Activated B cell treated with CpG ODN at 0.5 μM for 24 hours (primary cell): ENCODE measurements at regions of chr11 and their contacts with region 1.

Region 1: GRCh38 chr11:83071567-83072349 is at the start of gene RAB30:
- DNase-seq: peak; percentile 75
- ATAC-seq: peak; percentile 94
- H3K4me3 Mint-ChIP-seq: no peak within 1 kb of the TSS
- H3K27ac Mint-ChIP-seq: no peak within 1 kb of the TSS
- H3K4me1 Mint-ChIP-seq: peaks cover 66% of the 10 kb centered on the region
- H3K27me3 Mint-ChIP-seq: no peaks in the 10 kb centered on the region
- CTCF ChIP-seq: no peak
- total RNA-seq, gene RAB30: 160 and 173 TPM in 2 replicates

Region 2: GRCh38 chr11:82900277-82901164 is 171.2 kb before region 1 on chr11 and contains the start of gene PRCP:
- CTCF ChIA-PET with region 1: no interaction called
- POLR2A ChIA-PET with region 1: interaction called, 10 read pairs
- intact Hi-C with region 1: loop called (anchors 1 kb)
- DNase-seq: peak; percentile 78
- ATAC-seq: peak; percentile 75
- H3K4me3 Mint-ChIP-seq: peak within 1 kb of the TSS; percentile 100
- H3K27ac Mint-ChIP-seq: peak within 1 kb of the TSS; percentile 99
- H3K4me1 Mint-ChIP-seq: peaks cover 57% of the 10 kb centered on the region
- H3K27me3 Mint-ChIP-seq: no peaks in the 10 kb centered on the region
- CTCF ChIP-seq: no peak
- total RNA-seq, gene PRCP: 29.8 and 34.8 TPM in 2 replicates

Region 3: DNA sequence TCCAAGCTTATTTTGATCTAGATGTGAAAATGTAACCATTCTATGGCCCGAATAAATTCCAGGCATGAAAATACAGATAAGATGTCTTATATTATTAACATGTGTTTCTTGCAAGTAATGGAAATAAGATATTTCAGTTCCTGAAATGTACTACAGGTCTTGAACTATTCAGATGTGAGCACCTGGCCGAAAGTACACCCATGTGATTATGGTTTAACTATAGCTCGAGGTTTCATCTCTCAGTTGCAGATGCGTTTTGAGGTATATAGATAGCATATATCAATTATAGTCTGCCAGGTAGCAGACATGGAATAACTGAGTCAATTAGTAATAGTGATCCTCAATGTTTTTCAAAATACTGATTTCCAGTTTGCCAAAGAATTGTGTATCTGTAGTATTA is 101.9 kb before region 1 on chr11:
- CTCF ChIA-PET with region 1: no interaction called
- POLR2A ChIA-PET with region 1: interaction called, 15 read pairs
- intact Hi-C with region 1: no loop called
- DNase-seq: no peak
- ATAC-seq: peak; percentile 73
- H3K4me3 Mint-ChIP-seq: peak overlapping the region; percentile 41
- H3K27ac Mint-ChIP-seq: peak overlapping the region; percentile 69
- H3K4me1 Mint-ChIP-seq: peaks cover 54% of the 10 kb centered on the region
- H3K27me3 Mint-ChIP-seq: no peaks in the 10 kb centered on the region
- CTCF ChIP-seq: no peak

Region 4: GRCh38 chr11:83007909-83008580 is 63.7 kb before region 1 on chr11:
- CTCF ChIA-PET with region 1: no interaction called
- POLR2A ChIA-PET with region 1: interaction called, 14 read pairs
- intact Hi-C with region 1: loop called (anchors 2 kb)
- DNase-seq: no peak
- ATAC-seq: peak; percentile 28
- H3K4me3 Mint-ChIP-seq: peak overlapping the region; percentile 36
- H3K27ac Mint-ChIP-seq: peak overlapping the region; percentile 82
- H3K4me1 Mint-ChIP-seq: peaks cover 77% of the 10 kb centered on the region
- H3K27me3 Mint-ChIP-seq: no peaks in the 10 kb centered on the region
- CTCF ChIP-seq: no peak

Region 5: GRCh38 chr11:83051760-83052671 is 19.7 kb before region 1 on chr11:
- CTCF ChIA-PET with region 1: no interaction called
- POLR2A ChIA-PET with region 1: interaction called, 18 read pairs
- intact Hi-C with region 1: no loop called
- DNase-seq: no peak
- ATAC-seq: no peak
- H3K4me3 Mint-ChIP-seq: no peak overlapping the region
- H3K27ac Mint-ChIP-seq: peak overlapping the region; percentile 41
- H3K4me1 Mint-ChIP-seq: peaks cover 90% of the 10 kb centered on the region
- H3K27me3 Mint-ChIP-seq: no peaks in the 10 kb centered on the region
- CTCF ChIP-seq: no peak

Region 6: DNA sequence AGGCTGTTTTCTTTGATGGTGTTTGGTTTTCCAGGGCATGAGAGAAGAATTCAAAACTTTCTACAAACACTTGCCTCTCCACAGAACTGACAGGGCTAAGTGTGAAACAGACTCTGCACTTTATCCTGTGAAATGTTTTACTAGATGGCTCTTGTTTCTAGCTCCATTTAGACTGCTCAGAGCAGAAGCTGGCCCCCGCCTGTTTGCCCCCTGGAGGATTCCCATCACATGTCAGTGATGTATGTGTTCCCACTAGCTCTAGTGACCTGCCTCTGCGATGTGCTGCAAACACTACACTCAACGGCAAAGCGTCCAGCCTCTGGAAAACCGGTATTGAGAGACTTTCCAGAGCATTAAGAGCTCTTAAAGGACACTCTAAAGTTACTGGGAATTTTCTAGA is 43.8 kb after region 1 on chr11:
- CTCF ChIA-PET with region 1: no interaction called
- POLR2A ChIA-PET with region 1: interaction called, 3 read pairs
- intact Hi-C with region 1: loop called (anchors 2 kb)
- DNase-seq: no peak
- ATAC-seq: no peak
- H3K4me3 Mint-ChIP-seq: peak overlapping the region; percentile 64
- H3K27ac Mint-ChIP-seq: no peak overlapping the region
- H3K4me1 Mint-ChIP-seq: peaks cover 37% of the 10 kb centered on the region
- H3K27me3 Mint-ChIP-seq: no peaks in the 10 kb centered on the region
- CTCF ChIP-seq: no peak

Region 7: DNA sequence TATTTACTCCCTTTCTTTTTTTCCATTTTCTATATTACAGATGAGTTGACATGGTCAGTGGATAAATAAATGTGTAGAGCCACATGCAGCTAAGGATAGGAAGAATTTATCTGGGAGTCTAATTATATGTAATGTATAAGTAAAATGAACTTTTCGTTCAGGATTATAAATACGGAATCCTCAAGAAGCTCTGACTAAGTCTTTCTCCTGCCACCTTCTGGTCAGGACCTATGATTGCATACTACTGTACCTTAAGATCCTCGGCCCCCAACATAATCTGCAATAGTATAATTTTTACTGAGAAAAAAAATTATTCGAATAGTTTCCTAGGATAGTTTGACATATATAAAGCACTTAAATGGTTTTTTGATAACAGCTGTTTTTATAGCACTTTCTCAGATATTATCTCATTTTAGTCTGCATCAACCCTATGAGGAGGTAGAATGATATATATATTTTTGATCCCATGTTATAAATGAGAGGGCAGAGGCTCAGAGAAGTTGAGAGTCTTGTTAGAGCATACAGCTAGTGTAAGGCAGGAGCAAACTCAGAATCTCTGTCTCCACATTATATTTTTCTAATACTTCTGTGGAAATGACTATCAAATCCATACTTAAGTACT is 178.3 kb after region 1 on chr11:
- CTCF ChIA-PET with region 1: interaction called, 5 read pairs
- POLR2A ChIA-PET with region 1: interaction called, 4 read pairs
- intact Hi-C with region 1: loop called (anchors 5 kb)
- DNase-seq: no peak
- ATAC-seq: peak; percentile 75
- H3K4me3 Mint-ChIP-seq: no peak overlapping the region
- H3K27ac Mint-ChIP-seq: no peak overlapping the region
- H3K4me1 Mint-ChIP-seq: peaks cover 13% of the 10 kb centered on the region
- H3K27me3 Mint-ChIP-seq: no peaks in the 10 kb centered on the region
- CTCF ChIP-seq: peak; percentile 90